KBM-7 (cell line): ENCODE measurements at regions of chr19 and their contacts with region 1.

Region 1: GRCh38 chr19:43519436-43520088 is 7.4 kb downstream of the ETHE1 start:
- DNase-seq: peak; percentile 79

Region 2: GRCh38 chr19:43446746-43447489 is 72.6 kb before region 1 on chr19:
- in situ Hi-C with region 1: loop called (anchors 10 kb)
- DNase-seq: peak; percentile 76

Region 3: DNA sequence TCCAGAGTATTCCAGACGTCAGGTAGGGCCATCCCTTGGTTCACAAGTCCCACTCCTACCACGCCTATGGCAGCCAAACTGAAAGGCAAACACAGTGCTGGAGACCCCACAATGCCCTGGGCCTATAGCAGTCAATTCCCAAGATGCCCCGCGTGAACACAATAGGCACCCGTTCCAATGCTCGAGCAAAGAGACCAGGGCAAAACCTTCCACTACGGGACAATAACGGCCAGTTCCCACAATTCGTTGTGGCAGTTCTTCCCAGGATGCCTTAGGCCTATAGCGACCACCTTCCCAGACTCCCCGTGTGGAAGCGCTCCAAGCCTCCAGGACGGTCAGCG is 99.3 kb after region 1 on chr19:
- in situ Hi-C with region 1: no loop called
- DNase-seq: no peak

Region 4: DNA sequence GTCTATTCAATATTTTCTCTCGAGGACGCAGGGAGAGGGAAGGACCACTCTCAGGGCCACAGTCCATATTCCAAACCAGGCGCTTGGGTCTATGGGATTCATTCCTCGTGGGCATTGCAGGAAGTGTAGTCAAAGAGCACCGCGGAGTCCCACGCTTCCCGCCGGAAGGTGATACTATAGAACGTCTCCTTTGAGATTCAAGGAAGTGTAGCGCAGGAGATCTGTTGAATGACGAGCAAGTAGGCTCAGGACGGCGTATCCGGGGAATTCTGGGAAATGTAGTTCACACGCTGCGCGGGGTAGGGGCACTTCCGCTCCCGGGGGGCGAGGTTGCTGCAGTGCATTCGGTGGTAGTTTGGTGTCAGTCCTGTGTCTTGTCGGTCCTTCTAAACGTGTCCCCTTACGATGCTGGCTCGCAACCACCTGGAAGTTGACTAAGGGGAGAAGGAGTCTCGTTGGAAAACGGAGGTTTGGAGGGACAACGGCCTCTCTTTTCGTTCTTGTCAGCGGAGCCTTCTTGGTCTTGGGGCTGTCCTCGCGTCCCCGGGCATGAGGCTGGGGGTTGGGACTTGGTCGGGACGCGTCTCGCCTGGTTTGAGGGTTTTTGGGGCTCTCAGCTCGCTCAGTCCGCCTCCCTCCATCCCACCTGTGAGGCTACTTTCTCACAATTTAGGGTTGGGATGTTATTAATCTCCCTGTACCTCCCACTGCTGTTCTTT is 552.4 kb after region 1 on chr19 and contains the start of gene ZNF284:
- in situ Hi-C with region 1: no loop called
- DNase-seq: peak; percentile 92